A549 (cell line): ENCODE measurements at regions of chr4 and their contacts with region 1.

Region 1: GRCh38 chr4:75895744-75896314 is 6.4 kb downstream of the PPEF2 start:
- DNase-seq: peak; percentile 15 to 27
- ATAC-seq: peak; percentile 47 to 84; a peak in 4 of 6 replicates
- H3K4me3 ChIP-seq: no peak overlapping the region
- H3K27ac ChIP-seq: no peak overlapping the region
- H3K4me1 ChIP-seq: no peaks in the 10 kb centered on the region
- CTCF ChIP-seq: peak; percentile 57
- EP300 ChIP-seq: no peak
- POLR2A ChIP-seq: no peak
- RAD21 ChIP-seq: peak; percentile 29 to 46; a peak in 3 of 5 replicates

Region 2: DNA sequence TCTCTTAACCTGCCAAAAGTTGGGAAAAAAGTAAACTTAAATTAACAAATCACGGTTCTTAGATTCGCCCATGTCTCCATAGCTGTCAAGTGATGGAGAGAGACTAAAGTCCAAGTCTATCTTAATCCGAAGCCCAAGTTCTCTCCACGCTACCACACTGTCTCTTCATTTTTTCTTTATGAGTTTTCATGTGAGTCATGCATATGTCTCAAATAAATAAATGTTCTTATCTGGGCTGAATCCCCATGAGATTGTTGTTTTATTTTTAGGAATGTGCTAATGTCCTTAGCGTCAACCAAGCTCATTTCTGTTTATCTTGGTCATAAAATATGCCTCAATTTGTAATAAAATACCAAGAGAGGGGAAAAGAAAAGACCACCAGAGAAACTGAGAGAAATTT is 550.9 kb before region 1 on chr4:
- CTCF ChIA-PET with region 1: no interaction called
- POLR2A ChIA-PET with region 1: no interaction called
- DNase-seq: peak in 1 of 2 experiments; percentile 4
- ATAC-seq: no peak
- H3K4me3 ChIP-seq: no peak overlapping the region
- H3K27ac ChIP-seq: no peak overlapping the region
- H3K4me1 ChIP-seq: no peaks in the 10 kb centered on the region
- CTCF ChIP-seq: no peak
- EP300 ChIP-seq: no peak
- POLR2A ChIP-seq: no peak
- RAD21 ChIP-seq: no peak

Region 3: GRCh38 chr4:75841641-75842520 is 53.9 kb before region 1 on chr4:
- CTCF ChIA-PET with region 1: no interaction called
- POLR2A ChIA-PET with region 1: no interaction called
- DNase-seq: peak; percentile 26 to 83
- ATAC-seq: peak; percentile 42 to 81; a peak in 5 of 6 replicates
- H3K4me3 ChIP-seq: no peak overlapping the region
- H3K27ac ChIP-seq: peak overlapping the region; percentile 91 to 98
- H3K4me1 ChIP-seq: peaks cover 60% of the 10 kb centered on the region
- CTCF ChIP-seq: no peak
- EP300 ChIP-seq: no peak
- POLR2A ChIP-seq: no peak
- RAD21 ChIP-seq: no peak

Region 4: GRCh38 chr4:75881476-75881875 is 14.4 kb before region 1 on chr4:
- CTCF ChIA-PET with region 1: interaction called, 11 read pairs
- POLR2A ChIA-PET with region 1: no interaction called
- DNase-seq: no peak
- ATAC-seq: no peak
- H3K4me3 ChIP-seq: no peak overlapping the region
- H3K27ac ChIP-seq: no peak overlapping the region
- H3K4me1 ChIP-seq: no peaks in the 10 kb centered on the region
- CTCF ChIP-seq: no peak
- EP300 ChIP-seq: no peak
- POLR2A ChIP-seq: no peak
- RAD21 ChIP-seq: no peak

Region 5: GRCh38 chr4:75908555-75908954 is 12.7 kb after region 1 on chr4:
- CTCF ChIA-PET with region 1: interaction called, 23 read pairs
- POLR2A ChIA-PET with region 1: no interaction called
- DNase-seq: no peak
- ATAC-seq: no peak
- H3K4me3 ChIP-seq: no peak overlapping the region
- H3K27ac ChIP-seq: no peak overlapping the region
- H3K4me1 ChIP-seq: no peaks in the 10 kb centered on the region
- CTCF ChIP-seq: no peak
- EP300 ChIP-seq: no peak
- POLR2A ChIP-seq: no peak
- RAD21 ChIP-seq: no peak

Region 6: GRCh38 chr4:76326515-76326914 is 430.7 kb after region 1 on chr4:
- CTCF ChIA-PET with region 1: no interaction called
- POLR2A ChIA-PET with region 1: no interaction called
- DNase-seq: no peak
- ATAC-seq: no peak
- H3K4me3 ChIP-seq: no peak overlapping the region
- H3K27ac ChIP-seq: no peak overlapping the region
- H3K4me1 ChIP-seq: no peaks in the 10 kb centered on the region
- CTCF ChIP-seq: no peak
- EP300 ChIP-seq: no peak
- POLR2A ChIP-seq: no peak
- RAD21 ChIP-seq: no peak